ENCODE measurements at regions of chr21 and their contacts with region 1.

Region 1: GRCh38 chr21:41612674-41613532 is 104.9 kb upstream of the TMPRSS2 start:
- DNase-seq: peak; percentile 45 to 79 (median 68)
- ATAC-seq: peak; percentile 78 to 87 (median 84)
- H3K4me3 ChIP-seq: no peak overlapping the region
- H3K27ac ChIP-seq: peak overlapping the region; percentile 8 to 35 (median 20)
- H3K4me1 ChIP-seq: peaks cover 0 to 5% (median 0%) of the 10 kb centered on the region in 3 donors
- H3K27me3 ChIP-seq: no peaks in the 10 kb centered on the region
- CTCF ChIP-seq: peak; percentile 66 to 78 (median 73)

Region 2: DNA sequence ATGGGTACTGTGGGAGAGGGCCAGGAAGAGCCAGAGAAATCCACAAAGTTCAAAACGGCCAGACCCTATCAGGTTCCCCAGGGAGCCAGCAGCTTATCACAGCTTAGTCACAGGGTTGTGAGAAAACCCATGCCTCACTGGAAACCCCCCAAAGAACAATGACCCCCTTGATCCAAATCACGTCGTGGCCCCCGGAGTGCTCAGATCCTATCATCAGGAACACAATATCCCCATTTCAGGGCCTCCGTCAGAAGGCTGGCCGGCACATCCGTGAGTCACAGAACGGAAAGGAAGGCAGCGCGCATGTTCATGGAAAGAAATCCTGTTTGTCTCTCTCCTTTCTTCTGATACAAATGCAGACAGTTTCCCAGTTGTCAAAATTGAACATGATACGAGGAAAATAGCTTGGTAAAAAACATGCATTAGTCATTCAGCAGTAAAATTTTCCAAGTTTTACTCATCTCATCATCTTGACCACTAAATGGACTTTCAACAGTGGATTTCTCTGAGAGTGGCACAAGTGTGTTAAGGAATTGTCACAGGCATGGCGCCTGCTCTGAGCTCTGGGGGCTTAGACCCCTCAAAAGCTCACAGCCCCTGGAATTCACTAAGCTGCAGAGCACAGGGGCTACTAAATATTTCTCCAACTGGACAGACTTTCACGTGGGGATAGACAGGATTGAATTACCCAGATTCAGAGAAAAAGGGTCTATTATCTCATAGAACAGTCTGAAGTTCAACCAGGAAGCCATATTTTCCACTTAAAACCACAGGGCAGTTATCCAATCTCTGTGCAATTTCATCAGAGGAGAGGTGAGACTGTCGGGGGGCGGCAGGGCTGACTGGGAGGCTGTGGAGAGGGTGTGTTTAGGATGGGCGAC is 29.2 kb after region 1 on chr21:
- intact Hi-C with region 1: no loop called
- DNase-seq: no peak
- ATAC-seq: peak in 3 of 4 donors; percentile 62 to 80 (median 78)
- H3K4me3 ChIP-seq: no peak overlapping the region
- H3K27ac ChIP-seq: peak overlapping the region in 2 of 4 donors; percentile 45 to 69
- H3K4me1 ChIP-seq: no peaks in the 10 kb centered on the region
- H3K27me3 ChIP-seq: no peaks in the 10 kb centered on the region
- CTCF ChIP-seq: no peak

Region 3: GRCh38 chr21:41777951-41778874 is 165.3 kb after region 1 on chr21:
- intact Hi-C with region 1: loop called in 1 of 3 experiments (anchors 2 kb)
- DNase-seq: peak; percentile 85 to 94 (median 89)
- ATAC-seq: peak; percentile 84 to 93 (median 90)
- H3K4me3 ChIP-seq: no peak overlapping the region
- H3K27ac ChIP-seq: peak overlapping the region in 3 of 4 donors; percentile 44 to 80 (median 55)
- H3K4me1 ChIP-seq: peaks cover 4 to 20% (median 13%) of the 10 kb centered on the region in 3 donors
- H3K27me3 ChIP-seq: no peaks in the 10 kb centered on the region
- CTCF ChIP-seq: peak; percentile 76 to 99 (median 91)

Region 4: DNA sequence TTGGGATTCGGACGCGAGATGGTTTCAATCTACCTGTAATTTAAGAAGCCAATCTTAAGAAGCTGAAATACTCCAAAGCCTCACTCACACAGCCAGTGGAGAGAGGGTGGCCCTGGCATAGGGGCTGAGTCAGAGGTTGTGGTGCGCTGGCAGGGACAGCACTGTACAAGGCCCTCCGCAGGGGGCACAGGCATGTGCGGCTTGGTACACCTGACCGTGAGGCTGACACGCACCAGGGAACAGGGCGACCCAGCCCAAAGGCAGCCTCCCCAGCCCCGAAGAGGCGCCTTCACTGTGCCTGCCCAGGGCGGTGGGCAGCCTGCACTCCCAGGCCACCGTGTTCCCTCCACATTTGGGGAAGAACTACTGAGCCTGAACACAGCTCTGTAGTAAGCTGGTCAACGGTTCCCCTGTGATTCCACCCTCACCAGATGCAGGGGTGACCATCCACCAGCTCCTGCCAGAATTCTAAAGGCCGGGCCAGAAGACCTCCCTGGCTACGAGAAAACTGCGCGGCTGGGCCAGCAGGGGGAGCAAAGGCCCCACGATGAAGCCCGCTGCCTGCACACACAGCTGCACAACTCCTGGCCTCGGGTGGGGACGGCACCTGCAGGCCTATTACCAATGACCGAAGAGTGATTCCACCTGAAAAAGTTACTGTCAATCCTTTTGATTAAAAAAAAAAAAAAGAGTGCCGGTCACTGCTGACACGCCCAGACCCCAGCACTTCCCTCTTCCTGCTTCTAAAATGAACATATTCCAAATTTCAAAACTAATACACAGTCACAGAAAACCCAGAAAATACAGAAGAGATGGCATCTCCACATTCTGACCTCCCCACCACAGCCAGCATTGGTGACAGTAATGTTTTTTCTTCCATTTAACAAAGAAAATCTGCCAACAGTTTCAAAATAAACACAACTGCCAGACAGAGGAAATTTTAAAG is 203.6 kb after region 1 on chr21:
- intact Hi-C with region 1: loop called in 2 of 3 experiments (anchors 5 kb)
- DNase-seq: peak in 5 of 6 donors; percentile 57 to 82 (median 71)
- ATAC-seq: peak; percentile 87 to 97 (median 95)
- H3K4me3 ChIP-seq: no peak overlapping the region
- H3K27ac ChIP-seq: no peak overlapping the region
- H3K4me1 ChIP-seq: peaks cover 0 to 6% (median 0%) of the 10 kb centered on the region in 3 donors
- H3K27me3 ChIP-seq: no peaks in the 10 kb centered on the region
- CTCF ChIP-seq: peak; percentile 41 to 71 (median 61)

Region 5: GRCh38 chr21:42125571-42126544 is 513.0 kb after region 1 on chr21:
- intact Hi-C with region 1: loop called in 1 of 3 experiments (anchors 10 kb)
- DNase-seq: peak in 4 of 6 donors; percentile 17 to 65 (median 34)
- ATAC-seq: peak in 3 of 4 donors; percentile 55 to 71 (median 67)
- H3K4me3 ChIP-seq: no peak overlapping the region
- H3K27ac ChIP-seq: no peak overlapping the region
- H3K4me1 ChIP-seq: peaks cover 0 to 2% (median 0%) of the 10 kb centered on the region in 3 donors
- H3K27me3 ChIP-seq: no peaks in the 10 kb centered on the region
- CTCF ChIP-seq: peak in 1 of 4 donors; percentile 10

Region 6: DNA sequence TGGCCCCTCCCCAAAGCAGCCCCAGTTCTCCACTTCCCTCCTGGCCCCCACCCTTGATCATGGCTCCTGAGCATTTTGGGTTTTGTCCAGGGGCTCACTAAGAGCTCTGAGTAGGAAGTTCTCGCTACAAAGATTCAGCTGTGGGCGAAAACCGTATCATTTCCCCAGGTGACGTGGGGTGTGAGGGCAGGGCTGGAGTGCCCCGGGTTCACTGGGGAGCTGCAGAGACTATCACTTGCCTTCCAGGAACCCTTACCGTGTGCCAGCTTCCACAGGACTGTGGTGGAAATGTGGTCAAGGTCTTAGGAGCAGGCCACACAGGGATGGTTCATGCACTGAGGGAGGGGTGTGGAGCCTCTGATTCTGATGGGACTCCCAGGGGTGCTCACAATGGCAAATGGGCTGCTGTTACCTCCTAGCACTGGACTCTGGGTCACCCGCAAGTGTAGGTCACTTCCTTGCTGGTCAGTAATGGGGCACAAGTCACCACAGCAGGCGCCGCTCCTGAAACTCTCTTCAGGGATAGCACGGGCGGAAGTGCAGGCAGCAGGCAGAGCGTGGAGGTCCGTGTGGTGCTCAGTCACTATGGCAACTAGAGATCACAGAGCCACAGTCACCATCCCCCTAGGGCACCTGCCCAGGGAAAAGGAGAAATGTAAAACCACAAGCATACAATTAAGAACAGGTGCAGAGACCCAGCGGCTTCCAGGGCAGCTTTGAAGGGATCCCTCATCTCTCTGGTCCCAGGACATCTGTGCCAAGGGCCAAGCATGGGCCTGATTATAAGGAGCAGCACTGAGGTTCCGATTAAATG is 847.7 kb after region 1 on chr21:
- intact Hi-C with region 1: no loop called
- DNase-seq: no peak
- ATAC-seq: peak in 2 of 4 donors; percentile 24 to 25
- H3K4me3 ChIP-seq: no peak overlapping the region
- H3K27ac ChIP-seq: no peak overlapping the region
- H3K4me1 ChIP-seq: peaks cover 22 to 34% (median 33%) of the 10 kb centered on the region in 3 donors
- H3K27me3 ChIP-seq: no peaks in the 10 kb centered on the region
- CTCF ChIP-seq: no peak